Common myeloid progenitor, CD34-positive (primary cell): ENCODE measurements at regions of chr10 and their contacts with region 1.

Region 1: GRCh38 chr10:7687228-7687907 is 15.7 kb upstream of the ITIH2 start:
- DNase-seq: peak; percentile 92 to 95 (median 95)
- H3K4me3 ChIP-seq: no peak overlapping the region
- H3K27ac ChIP-seq: no peak overlapping the region
- H3K4me1 ChIP-seq: no peaks in the 10 kb centered on the region
- H3K27me3 ChIP-seq: peaks cover 0 to 5% (median 0%) of the 10 kb centered on the region in 5 experiments

Region 2: GRCh38 chr10:7525314-7526016 is 161.9 kb before region 1 on chr10:
- CTCF ChIA-PET with region 1: interaction called, 26 read pairs
- POLR2A ChIA-PET with region 1: no interaction called
- DNase-seq: peak; percentile 72 to 86 (median 79)
- H3K4me3 ChIP-seq: no peak overlapping the region
- H3K27ac ChIP-seq: no peak overlapping the region
- H3K4me1 ChIP-seq: no peaks in the 10 kb centered on the region
- H3K27me3 ChIP-seq: peaks cover 0 to 32% (median 8%) of the 10 kb centered on the region in 5 experiments

Region 3: GRCh38 chr10:7671121-7671520 is 16.2 kb before region 1 on chr10:
- CTCF ChIA-PET with region 1: interaction called, 15 read pairs
- POLR2A ChIA-PET with region 1: no interaction called
- DNase-seq: no peak
- H3K4me3 ChIP-seq: no peak overlapping the region
- H3K27ac ChIP-seq: no peak overlapping the region
- H3K4me1 ChIP-seq: peaks cover under 1 to 7% (median 6%) of the 10 kb centered on the region in 4 experiments
- H3K27me3 ChIP-seq: peaks cover 8 to 66% (median 20%) of the 10 kb centered on the region in 5 experiments

Region 4: GRCh38 chr10:7857262-7857661 is 169.9 kb after region 1 on chr10:
- CTCF ChIA-PET with region 1: no interaction called
- POLR2A ChIA-PET with region 1: no interaction called
- DNase-seq: no peak
- H3K4me3 ChIP-seq: no peak overlapping the region
- H3K27ac ChIP-seq: no peak overlapping the region
- H3K4me1 ChIP-seq: no peaks in the 10 kb centered on the region
- H3K27me3 ChIP-seq: no peaks in the 10 kb centered on the region